Right ventricle myocardium inferior (tissue), 1 donor: ENCODE measurements at regions of chr1 and their contacts with region 1.

Region 1: DNA sequence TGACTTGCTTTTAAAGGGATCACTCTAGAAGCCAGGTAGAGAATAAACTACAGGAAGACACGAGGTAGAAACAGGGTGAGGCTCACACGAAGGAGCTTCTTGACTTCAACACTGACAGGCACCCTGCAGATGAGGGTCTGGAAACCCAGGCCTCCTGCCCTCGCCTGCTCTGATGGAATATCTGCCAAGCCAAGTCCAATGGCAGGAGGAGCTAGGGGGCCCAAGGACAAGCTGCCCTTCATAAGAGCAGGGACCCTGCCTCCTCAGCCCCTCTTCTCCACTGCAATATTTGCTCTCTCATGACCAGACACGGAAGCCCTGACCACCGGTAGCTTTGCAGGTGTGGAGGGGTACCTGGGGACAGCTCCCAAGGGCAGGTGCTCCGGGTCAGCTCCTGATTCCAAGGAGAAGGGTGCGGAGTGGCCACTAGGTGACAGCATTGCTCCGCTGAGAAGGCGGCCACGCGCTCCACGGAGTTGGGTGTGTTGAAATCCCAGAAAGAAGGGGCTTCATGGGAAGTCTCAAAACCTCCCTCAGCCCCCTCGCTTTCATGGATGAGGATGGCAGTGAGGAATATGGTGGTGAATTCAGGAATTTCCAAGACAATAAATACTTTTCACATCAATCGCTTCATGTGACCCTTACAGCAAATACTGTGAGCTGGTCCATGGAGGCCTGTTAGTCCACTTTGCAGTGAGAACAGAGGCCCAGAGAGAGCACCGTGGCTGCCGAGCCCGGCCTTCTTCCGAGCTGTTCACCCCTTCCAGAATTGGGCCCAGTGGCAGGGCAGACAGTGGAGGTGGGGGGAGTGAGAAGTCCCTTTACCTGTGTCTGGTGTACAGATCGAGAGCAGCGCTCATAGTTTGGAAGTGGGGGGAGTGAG is 33.2 kb upstream of the PAX7 start:
- DNase-seq: peak; percentile 78
- ATAC-seq: peak; percentile 76

Region 2: GRCh38 chr1:18820791-18821641 is 223.6 kb after region 1 on chr1:
- intact Hi-C with region 1: loop called (anchors 1 kb)
- DNase-seq: peak; percentile 86
- ATAC-seq: peak; percentile 76

Region 3: DNA sequence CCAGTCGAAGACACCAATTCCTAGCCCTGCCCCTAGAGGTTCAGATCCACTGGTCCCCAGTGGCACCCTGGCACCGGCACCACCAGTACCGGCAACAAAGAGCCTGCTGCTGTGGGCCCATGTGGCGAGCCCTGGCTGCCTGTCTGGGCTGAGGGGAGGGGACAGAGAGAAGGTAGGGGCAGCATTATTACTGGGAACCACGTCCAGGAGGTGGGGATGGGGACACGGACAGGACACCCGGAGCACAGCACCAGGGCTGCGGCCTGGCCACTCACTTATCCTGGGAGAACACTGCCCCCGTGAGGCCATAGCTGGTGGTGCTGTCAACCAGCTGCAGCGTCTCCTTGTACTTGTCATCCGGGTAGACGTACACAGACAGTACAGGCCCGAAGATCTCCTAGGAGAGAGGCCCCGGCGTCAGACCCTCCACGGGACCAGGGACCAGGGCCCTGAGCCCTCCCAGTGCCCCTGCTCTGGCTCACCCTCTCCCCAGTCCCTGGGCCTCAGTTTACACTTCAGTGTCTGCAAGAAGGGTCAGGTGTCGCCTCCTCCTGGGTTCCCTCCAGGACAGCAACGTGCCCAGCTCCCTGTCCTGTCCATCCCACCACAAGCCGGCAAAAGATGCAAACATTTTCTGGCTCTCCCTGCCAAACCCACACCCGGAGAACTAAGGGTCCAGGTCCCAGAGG is 277.9 kb after region 1 on chr1:
- intact Hi-C with region 1: loop called (anchors 2 kb)
- DNase-seq: peak; percentile 82
- ATAC-seq: peak; percentile 65